ENCODE measurements at regions of chr7 and their contacts with region 1.

Region 1: GRCh38 chr7:5704534-5704922 is 76.9 kb downstream of the RNF216 start:
- H3K4me3 Mint-ChIP-seq: no peak overlapping the region
- H3K27ac Mint-ChIP-seq: no peak overlapping the region
- H3K4me1 Mint-ChIP-seq: peaks cover 44% of the 10 kb centered on the region
- H3K27me3 Mint-ChIP-seq: no peaks in the 10 kb centered on the region

Region 2: DNA sequence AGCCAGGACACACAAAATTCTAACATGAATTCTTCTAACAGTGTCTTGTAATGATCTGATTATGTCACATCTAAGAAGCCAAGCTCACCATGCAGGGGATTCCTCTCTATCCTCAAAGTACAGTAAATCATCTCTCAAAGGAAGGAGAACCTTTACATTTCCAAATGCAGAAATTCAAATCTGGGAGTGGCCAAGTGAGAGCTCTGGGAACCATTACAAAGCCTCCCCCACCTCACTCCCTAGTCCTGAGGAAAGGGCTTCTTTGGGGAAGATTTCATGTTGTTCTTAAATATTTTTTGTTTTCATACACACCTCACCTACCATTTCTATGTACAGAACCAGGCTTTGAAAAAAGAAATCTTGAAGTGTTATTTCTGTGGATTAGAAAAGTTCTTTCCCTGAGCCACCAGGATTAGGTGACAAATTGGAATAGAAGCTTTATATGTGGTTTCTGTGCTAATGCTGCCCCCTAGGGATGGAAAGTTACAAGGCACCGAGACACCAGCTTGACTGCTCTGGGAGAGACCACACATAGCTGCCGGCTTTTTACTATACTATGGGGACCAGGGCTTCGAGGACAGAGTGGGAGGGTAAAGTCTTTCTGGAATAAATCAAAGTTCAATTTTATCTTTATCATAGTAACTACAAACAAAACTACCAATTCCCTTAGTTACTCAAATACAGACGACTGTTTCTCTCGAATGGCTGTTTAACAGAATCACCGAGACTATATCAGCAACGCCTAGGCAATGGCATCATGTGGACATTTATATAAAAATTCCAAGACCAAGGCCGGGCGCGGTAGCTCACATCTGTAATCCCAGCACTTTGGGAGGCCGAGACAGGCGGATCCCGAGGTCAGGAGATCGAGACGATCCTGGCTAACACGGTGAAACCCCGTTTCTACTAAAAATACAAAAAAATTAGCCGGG is 39.2 kb before region 1 on chr7:
- intact Hi-C with region 1: loop called (anchors 1 kb)
- H3K4me3 Mint-ChIP-seq: no peak overlapping the region
- H3K27ac Mint-ChIP-seq: no peak overlapping the region
- H3K4me1 Mint-ChIP-seq: peaks cover 59% of the 10 kb centered on the region
- H3K27me3 Mint-ChIP-seq: no peaks in the 10 kb centered on the region

Measured in dendritic cell treated with granulocyte-macrophage colony-stimulating factor and Interleukin-4, amounts not matched to agents 40 ng/mL and 50 ng/mL, for 4 days (primary cell).